Activated naive CD4-positive, alpha-beta T cell treated with anti-CD3 and anti-CD28 coated beads for 36 hours (primary cell): ENCODE measurements at regions of chr6 and their contacts with region 1.

Region 1: GRCh38 chr6:116279260-116280063 is at the start of gene TSPYL1:
- DNase-seq: peak; percentile 97
- H3K4me3 Mint-ChIP-seq: peak within 1 kb of the TSS; percentile 93
- H3K27ac Mint-ChIP-seq: peak within 1 kb of the TSS; percentile 96
- H3K4me1 Mint-ChIP-seq: peaks cover 36% of the 10 kb centered on the region
- H3K27me3 Mint-ChIP-seq: no peaks in the 10 kb centered on the region
- total RNA-seq, gene TSPYL1: 33.4 to 34.7 TPM

Region 2: GRCh38 chr6:116217069-116217468 is 62.4 kb before region 1 on chr6:
- CTCF ChIA-PET with region 1: interaction called, 5 read pairs
- intact Hi-C with region 1: loop called (anchors 1 kb)
- DNase-seq: no peak
- H3K4me3 Mint-ChIP-seq: no peak overlapping the region
- H3K27ac Mint-ChIP-seq: no peak overlapping the region
- H3K4me1 Mint-ChIP-seq: peaks cover 4% of the 10 kb centered on the region
- H3K27me3 Mint-ChIP-seq: no peaks in the 10 kb centered on the region

Region 3: DNA sequence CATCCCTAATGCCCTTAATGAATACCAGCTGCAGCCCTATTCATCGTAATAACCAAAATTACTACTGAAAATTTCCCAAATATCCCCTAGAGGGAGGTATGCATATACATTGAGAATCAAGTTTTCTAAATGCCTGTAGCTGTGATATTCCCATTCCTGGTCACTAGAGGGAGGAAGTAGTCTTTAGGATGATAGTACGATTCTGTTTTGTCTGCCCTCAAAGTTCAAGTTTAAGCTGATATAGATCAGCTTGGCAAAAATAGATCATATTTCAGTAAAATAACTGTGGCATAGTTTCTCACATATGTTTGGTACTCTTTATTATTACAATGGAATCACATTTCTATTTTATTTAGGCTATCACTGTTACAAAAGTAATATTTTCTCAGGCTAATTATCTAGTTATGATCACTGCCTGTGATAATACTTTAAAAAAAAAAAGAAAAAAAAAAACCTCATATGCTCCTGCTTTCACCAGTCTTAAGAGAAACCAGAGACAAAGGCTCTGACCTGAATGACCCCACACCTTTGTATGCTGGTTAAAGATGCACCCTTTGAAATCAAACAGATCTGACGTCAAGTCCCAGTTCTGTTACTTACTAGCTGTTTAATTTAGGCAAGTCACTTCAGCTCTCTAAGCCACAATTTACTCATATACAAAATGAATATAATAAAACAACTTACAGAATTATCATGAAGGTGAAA is 10.7 kb before region 1 on chr6:
- CTCF ChIA-PET with region 1: interaction called, 31 read pairs
- intact Hi-C with region 1: loop called (anchors 1 kb)
- DNase-seq: no peak
- H3K4me3 Mint-ChIP-seq: no peak overlapping the region
- H3K27ac Mint-ChIP-seq: no peak overlapping the region
- H3K4me1 Mint-ChIP-seq: peaks cover 27% of the 10 kb centered on the region
- H3K27me3 Mint-ChIP-seq: no peaks in the 10 kb centered on the region

Region 4: GRCh38 chr6:116461932-116462885 is 182.7 kb after region 1 on chr6:
- CTCF ChIA-PET with region 1: no interaction called
- intact Hi-C with region 1: loop called (anchors 5 kb)
- DNase-seq: peak; percentile 54
- H3K4me3 Mint-ChIP-seq: peak overlapping the region; percentile 56
- H3K27ac Mint-ChIP-seq: no peak overlapping the region
- H3K4me1 Mint-ChIP-seq: peaks cover 20% of the 10 kb centered on the region
- H3K27me3 Mint-ChIP-seq: peaks cover 22% of the 10 kb centered on the region

Region 5: GRCh38 chr6:116667623-116668022 is 388.2 kb after region 1 on chr6:
- CTCF ChIA-PET with region 1: interaction called, 5 read pairs
- intact Hi-C with region 1: loop called (anchors 1 kb)
- DNase-seq: no peak
- H3K4me3 Mint-ChIP-seq: peak overlapping the region; percentile 99
- H3K27ac Mint-ChIP-seq: peak overlapping the region; percentile 12
- H3K4me1 Mint-ChIP-seq: peaks cover 35% of the 10 kb centered on the region
- H3K27me3 Mint-ChIP-seq: no peaks in the 10 kb centered on the region